Naive thymus-derived CD4-positive, alpha-beta T cell (primary cell): ENCODE measurements at regions of chr12 and their contacts with region 1.

Region 1: DNA sequence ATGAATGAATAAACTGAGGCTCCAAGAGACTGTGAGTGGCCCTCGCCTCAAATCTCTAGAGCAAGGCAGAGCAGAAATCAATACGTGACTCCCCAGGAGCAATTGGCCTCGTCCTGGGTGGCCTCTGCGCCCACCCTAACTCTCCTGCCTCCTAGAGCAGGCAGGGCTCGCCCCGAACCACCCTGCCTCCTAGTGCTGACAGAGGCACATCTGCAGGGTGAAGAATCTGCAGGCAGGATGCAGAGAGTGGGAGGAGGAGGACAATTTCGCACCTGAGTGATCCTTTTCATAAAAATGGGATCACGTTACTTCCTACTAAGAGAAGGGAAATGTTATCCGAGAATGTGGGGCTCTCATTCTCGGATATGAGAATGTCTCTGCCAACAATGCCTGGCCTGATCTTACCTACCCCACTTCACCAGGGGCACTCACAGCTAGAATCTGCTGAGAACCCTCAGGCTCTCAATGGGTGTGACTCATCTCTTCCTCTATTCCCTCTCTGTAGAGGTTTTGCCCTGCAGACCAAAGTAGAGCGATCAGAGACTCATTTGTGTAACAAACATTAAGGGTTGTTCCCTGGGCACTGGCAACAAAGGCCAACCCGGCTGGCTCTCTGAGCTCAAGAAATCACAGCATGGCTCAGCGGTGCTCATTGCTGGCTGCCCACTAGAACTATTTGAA is 61.7 kb upstream of the BCL2L14 start:
- DNase-seq: peak in 7 of 9 donors; percentile 31 to 67 (median 36)
- ATAC-seq: peak; percentile 67
- H3K4me3 ChIP-seq: peak overlapping the region; percentile 15
- H3K4me3 Mint-ChIP-seq: peak overlapping the region; percentile 74 to 88 (median 82)
- H3K27ac ChIP-seq: peak overlapping the region; percentile 16
- H3K27ac Mint-ChIP-seq: peak overlapping the region; percentile 83 to 96 (median 90)
- H3K4me1 ChIP-seq: peaks cover 44 to 53% of the 10 kb centered on the region in 2 donors
- H3K4me1 Mint-ChIP-seq: peaks cover 53 to 88% (median 81%) of the 10 kb centered on the region in 7 donors
- H3K27me3 ChIP-seq: no peaks in the 10 kb centered on the region
- H3K27me3 Mint-ChIP-seq: peaks cover 0 to 9% (median 0%) of the 10 kb centered on the region in 5 donors

Region 2: GRCh38 chr12:11730299-11731041 is 278.6 kb before region 1 on chr12:
- CTCF ChIA-PET with region 1: no interaction called
- POLR2A ChIA-PET with region 1: no interaction called
- intact Hi-C with region 1: loop called in 1 of 2 experiments (anchors 1 kb)
- DNase-seq: no peak
- ATAC-seq: peak; percentile 21
- H3K4me3 ChIP-seq: no peak overlapping the region
- H3K4me3 Mint-ChIP-seq: peak overlapping the region; percentile 39 to 90 (median 71)
- H3K27ac ChIP-seq: peak overlapping the region; percentile 34
- H3K27ac Mint-ChIP-seq: peak overlapping the region; percentile 81 to 98 (median 91)
- H3K4me1 ChIP-seq: peaks cover 25 to 60% of the 10 kb centered on the region in 2 donors
- H3K4me1 Mint-ChIP-seq: peaks cover 61 to 86% (median 76%) of the 10 kb centered on the region in 7 donors
- H3K27me3 ChIP-seq: no peaks in the 10 kb centered on the region
- H3K27me3 Mint-ChIP-seq: no peaks in the 10 kb centered on the region

Region 3: DNA sequence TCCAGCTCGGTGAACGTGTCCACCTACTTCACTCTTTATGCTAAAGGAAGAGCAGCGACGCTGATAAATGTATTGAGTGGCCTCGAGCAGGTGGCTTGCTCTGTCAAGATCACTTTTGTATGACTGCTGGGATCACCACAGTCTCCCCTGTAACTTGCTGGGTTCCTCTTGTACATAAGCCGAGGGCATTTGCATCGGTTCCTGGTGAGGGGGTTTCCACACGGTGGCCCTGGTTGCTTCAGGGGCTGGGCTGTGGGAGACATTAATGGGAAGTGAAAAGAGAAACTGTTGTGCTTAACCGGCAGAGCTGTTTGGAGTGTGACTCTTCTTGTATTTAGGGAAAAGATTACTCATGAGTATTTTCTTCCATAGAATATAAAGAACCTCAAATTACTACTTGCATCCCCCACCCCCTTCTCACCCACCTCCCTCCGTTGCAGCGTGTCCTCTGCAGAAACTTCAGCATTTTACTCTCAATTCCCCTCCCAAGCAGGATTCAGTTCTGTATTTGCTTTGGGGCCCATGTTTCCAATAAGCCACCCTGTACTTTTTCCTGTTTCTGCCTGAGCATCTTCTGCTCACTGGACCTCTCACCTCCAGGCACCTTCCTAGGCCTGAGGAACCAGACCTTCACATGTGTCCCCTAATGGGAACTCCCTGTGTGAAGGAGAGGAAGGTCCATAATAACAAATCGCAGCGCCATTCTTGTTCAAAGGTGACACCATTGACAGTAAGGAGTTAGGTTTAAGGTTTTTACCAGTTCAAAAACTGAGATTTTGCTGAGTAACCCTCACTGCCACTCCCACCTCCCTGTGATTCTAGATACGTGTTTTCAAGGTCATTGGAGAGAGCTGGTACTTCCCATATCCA is 172.6 kb before region 1 on chr12:
- CTCF ChIA-PET with region 1: no interaction called
- POLR2A ChIA-PET with region 1: no interaction called
- intact Hi-C with region 1: loop called in 1 of 2 experiments (anchors 10 kb)
- DNase-seq: peak in 1 of 9 donors; percentile 76
- ATAC-seq: peak; percentile 79
- H3K4me3 ChIP-seq: no peak overlapping the region
- H3K4me3 Mint-ChIP-seq: peak overlapping the region in 1 of 10 donors; percentile 79
- H3K27ac ChIP-seq: no peak overlapping the region
- H3K27ac Mint-ChIP-seq: peak overlapping the region in 3 of 9 donors; percentile 12 to 81 (median 61)
- H3K4me1 ChIP-seq: no peaks in the 10 kb centered on the region
- H3K4me1 Mint-ChIP-seq: peaks cover 8 to 54% (median 27%) of the 10 kb centered on the region in 7 donors
- H3K27me3 ChIP-seq: no peaks in the 10 kb centered on the region
- H3K27me3 Mint-ChIP-seq: no peaks in the 10 kb centered on the region

Region 4: GRCh38 chr12:11916771-11917170 is 92.3 kb before region 1 on chr12:
- CTCF ChIA-PET with region 1: no interaction called
- POLR2A ChIA-PET with region 1: no interaction called
- intact Hi-C with region 1: loop called in 1 of 2 experiments (anchors 5 kb)
- DNase-seq: no peak
- ATAC-seq: no peak
- H3K4me3 ChIP-seq: no peak overlapping the region
- H3K4me3 Mint-ChIP-seq: no peak overlapping the region
- H3K27ac ChIP-seq: no peak overlapping the region
- H3K27ac Mint-ChIP-seq: peak overlapping the region in 1 of 9 donors; percentile 16
- H3K4me1 ChIP-seq: no peaks in the 10 kb centered on the region
- H3K4me1 Mint-ChIP-seq: peaks cover 0 to 5% (median 0%) of the 10 kb centered on the region in 7 donors
- H3K27me3 ChIP-seq: no peaks in the 10 kb centered on the region
- H3K27me3 Mint-ChIP-seq: peaks cover 0 to 5% (median 0%) of the 10 kb centered on the region in 5 donors

Region 5: DNA sequence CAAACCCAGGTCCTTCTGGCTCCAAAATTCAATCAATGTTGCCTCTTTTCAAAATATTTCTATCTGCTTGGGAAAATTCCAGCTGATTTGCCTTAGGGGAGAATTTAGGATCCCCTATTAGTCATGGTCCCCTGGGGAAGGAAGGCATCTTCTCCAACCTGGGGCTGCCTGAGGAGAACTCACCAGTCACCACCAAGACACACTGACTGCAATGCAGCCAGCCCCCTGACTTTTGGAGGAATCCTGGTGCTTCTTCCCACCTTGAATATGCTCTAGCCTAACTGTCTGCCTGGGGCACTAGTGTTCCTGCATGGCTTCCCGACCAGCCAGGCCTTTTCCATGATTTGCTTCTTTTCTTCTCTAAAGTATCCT is 10.1 kb before region 1 on chr12:
- CTCF ChIA-PET with region 1: interaction called, 11 read pairs
- POLR2A ChIA-PET with region 1: interaction called, 27 read pairs
- intact Hi-C with region 1: loop called in 1 of 2 experiments (anchors 1 kb)
- DNase-seq: no peak
- ATAC-seq: no peak
- H3K4me3 ChIP-seq: peak overlapping the region; percentile 48
- H3K4me3 Mint-ChIP-seq: peak overlapping the region; percentile 18 to 75 (median 58)
- H3K27ac ChIP-seq: peak overlapping the region; percentile 39
- H3K27ac Mint-ChIP-seq: peak overlapping the region; percentile 67 to 95 (median 92)
- H3K4me1 ChIP-seq: peaks cover 18 to 19% of the 10 kb centered on the region in 2 donors
- H3K4me1 Mint-ChIP-seq: peaks cover 22 to 61% (median 46%) of the 10 kb centered on the region in 7 donors
- H3K27me3 ChIP-seq: no peaks in the 10 kb centered on the region
- H3K27me3 Mint-ChIP-seq: no peaks in the 10 kb centered on the region

Region 6: DNA sequence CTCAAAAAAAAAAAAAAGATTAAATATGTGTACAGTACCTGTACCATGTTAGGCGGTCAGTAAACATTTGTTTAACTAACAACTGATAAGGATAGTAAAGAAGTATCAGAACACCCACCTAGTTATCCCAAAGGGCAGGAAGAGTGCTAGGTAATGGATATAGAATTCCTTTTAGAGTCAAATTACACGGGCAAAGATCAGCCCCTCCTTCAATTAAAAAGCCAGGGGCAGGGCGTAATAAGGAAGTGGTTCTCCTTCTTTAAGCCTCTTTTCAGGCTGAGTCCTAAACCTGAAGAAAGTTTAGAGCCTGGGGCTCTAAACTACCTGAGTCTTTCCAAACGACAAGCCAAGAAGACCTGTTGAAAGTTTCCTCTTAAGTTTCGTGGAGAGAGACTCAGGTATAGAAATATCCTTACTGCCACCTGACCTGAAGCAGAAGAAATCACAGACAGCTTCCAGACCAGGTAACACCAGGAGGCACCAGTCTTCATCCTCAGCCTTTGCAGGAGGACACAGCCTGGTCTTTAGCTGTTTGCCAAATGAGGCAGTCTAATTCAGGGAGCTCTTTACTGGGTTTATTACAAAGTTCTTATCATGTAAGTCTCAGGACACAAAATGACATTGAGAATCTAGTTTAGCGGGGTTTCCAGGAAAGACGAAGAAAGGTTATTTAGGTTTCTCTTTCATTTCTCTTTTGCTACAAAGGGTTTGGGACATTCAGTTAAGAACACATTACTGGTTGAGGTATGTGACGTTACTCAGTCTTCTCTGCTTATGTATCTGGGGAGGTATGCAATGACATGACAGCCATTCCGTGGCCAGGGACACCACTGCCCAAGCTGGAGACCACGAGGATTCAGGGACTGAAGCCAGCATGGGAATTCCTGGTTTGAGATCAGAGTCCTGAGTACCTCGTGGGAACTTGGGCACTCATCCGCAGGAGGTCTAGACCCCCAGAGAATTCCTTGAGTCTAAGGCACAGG is 61.9 kb after region 1 on chr12 and contains the start of gene BCL2L14:
- CTCF ChIA-PET with region 1: no interaction called
- POLR2A ChIA-PET with region 1: no interaction called
- intact Hi-C with region 1: loop called in 1 of 2 experiments (anchors 1 kb)
- DNase-seq: peak in 6 of 9 donors; percentile 11 to 34 (median 24)
- ATAC-seq: peak; percentile 40
- H3K4me3 ChIP-seq: peak within 1 kb of the TSS; percentile 47
- H3K4me3 Mint-ChIP-seq: peak within 1 kb of the TSS; percentile 65 to 92 (median 79)
- H3K27ac ChIP-seq: peak within 1 kb of the TSS; percentile 58
- H3K27ac Mint-ChIP-seq: peak within 1 kb of the TSS; percentile 52 to 96 (median 90)
- H3K4me1 ChIP-seq: peaks cover 0 to 5% of the 10 kb centered on the region in 2 donors
- H3K4me1 Mint-ChIP-seq: peaks cover 13 to 37% (median 24%) of the 10 kb centered on the region in 7 donors
- H3K27me3 ChIP-seq: no peaks in the 10 kb centered on the region
- H3K27me3 Mint-ChIP-seq: peaks cover 0 to 8% (median 0%) of the 10 kb centered on the region in 5 donors
- total RNA-seq, gene BCL2L14: 0.92 to 7.6 (median 1.4) TPM

Region 7: GRCh38 chr12:12724661-12725545 is 715.8 kb after region 1 on chr12:
- CTCF ChIA-PET with region 1: no interaction called
- POLR2A ChIA-PET with region 1: no interaction called
- intact Hi-C with region 1: loop called in 1 of 2 experiments (anchors 10 kb)
- DNase-seq: peak; percentile 78 to 97 (median 92)
- ATAC-seq: peak; percentile 77
- H3K4me3 ChIP-seq: peak overlapping the region; percentile 53
- H3K4me3 Mint-ChIP-seq: peak overlapping the region; percentile 87 to 98 (median 94)
- H3K27ac ChIP-seq: peak overlapping the region; percentile 99
- H3K27ac Mint-ChIP-seq: peak overlapping the region; percentile 96 to 99 (median 97)
- H3K4me1 ChIP-seq: peaks cover 28% of the 10 kb centered on the region in 2 donors
- H3K4me1 Mint-ChIP-seq: peaks cover 23 to 64% (median 56%) of the 10 kb centered on the region in 7 donors
- H3K27me3 ChIP-seq: no peaks in the 10 kb centered on the region
- H3K27me3 Mint-ChIP-seq: peaks cover 0 to 7% (median 0%) of the 10 kb centered on the region in 5 donors